ENCODE measurements at regions of chr10 and their contacts with region 1.

Region 1: GRCh38 chr10:96910488-96911395 is 78.6 kb downstream of the LCOR start:
- DNase-seq: peak; percentile 29
- H3K4me3 Mint-ChIP-seq: no peak overlapping the region
- H3K27ac Mint-ChIP-seq: no peak overlapping the region
- H3K4me1 Mint-ChIP-seq: peaks cover 20% of the 10 kb centered on the region
- H3K27me3 Mint-ChIP-seq: no peaks in the 10 kb centered on the region

Region 2: DNA sequence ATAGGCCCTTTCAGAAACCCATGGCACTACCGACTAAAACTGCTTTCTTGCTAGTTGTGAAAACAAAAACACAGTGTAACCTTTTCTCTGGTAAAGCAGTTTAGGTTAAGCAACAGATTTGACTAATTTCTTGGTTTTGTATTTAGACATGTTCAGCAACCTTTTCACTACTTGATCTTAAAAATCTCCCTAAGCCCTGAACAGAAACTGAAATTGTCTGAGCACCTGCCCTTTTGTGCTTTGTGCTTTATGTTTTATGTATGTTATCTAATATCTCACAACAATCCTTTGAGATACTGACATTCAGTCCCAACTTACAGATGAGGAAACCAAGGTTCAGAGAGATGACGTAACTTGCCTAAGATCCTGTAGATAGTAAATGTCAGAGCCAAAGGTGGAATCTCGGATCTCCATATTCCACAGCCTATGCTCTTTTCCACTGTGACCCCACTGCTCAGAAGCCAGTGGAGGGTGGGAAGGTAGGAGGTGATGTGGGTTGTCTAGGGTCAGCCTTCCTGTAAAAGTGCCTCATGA is 67.9 kb after region 1 on chr10:
- CTCF ChIA-PET with region 1: interaction called, 3 read pairs
- intact Hi-C with region 1: loop called (anchors 5 kb)
- DNase-seq: peak; percentile 28
- H3K4me3 Mint-ChIP-seq: no peak overlapping the region
- H3K27ac Mint-ChIP-seq: peak overlapping the region; percentile 4
- H3K4me1 Mint-ChIP-seq: peaks cover 11% of the 10 kb centered on the region
- H3K27me3 Mint-ChIP-seq: no peaks in the 10 kb centered on the region